Left ventricle myocardium superior (tissue), 1 donor: ENCODE measurements at regions of chr1 and their contacts with region 1.

Region 1: GRCh38 chr1:169475806-169476387 is 9.8 kb downstream of the SLC19A2 start:
- DNase-seq: no peak
- ATAC-seq: no peak

Region 2: DNA sequence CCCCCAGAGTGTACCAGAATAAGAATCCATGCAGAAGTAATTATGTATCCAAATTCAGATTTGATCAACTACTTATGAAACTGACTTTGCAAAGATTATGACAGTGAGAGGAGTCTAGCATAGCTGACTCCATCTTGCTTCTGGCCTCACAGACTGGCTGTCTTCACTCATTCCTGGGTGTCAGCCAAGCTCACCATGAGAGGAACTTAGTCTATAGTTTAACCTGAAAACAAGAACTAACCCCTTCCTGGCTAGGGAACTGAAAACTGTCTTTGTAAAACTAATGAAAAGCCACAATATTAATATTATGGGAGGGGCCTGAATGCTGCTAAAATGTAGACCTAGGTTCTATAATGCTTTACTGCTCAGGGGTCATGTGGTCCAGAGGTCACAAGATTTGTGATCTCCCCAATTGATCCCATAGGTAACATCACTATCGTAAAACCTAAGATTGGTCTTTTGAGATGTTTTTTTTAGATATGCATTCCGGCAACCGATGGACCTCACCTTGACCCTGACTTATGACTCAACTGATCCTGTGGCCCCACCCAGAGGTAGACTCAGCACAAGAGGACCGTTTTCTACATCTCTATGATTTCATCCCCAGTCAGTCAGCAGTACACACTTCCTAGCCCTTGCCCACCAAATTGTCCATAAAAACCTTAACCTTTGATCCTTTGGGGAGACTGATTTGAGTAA is 314.3 kb before region 1 on chr1:
- intact Hi-C with region 1: no loop called
- DNase-seq: no peak
- ATAC-seq: peak; percentile 49

Region 3: GRCh38 chr1:169491845-169492281 is 16.0 kb after region 1 on chr1:
- intact Hi-C with region 1: loop called (anchors 2 kb)
- DNase-seq: no peak
- ATAC-seq: no peak